ENCODE measurements at regions of chr22 and their contacts with region 1.

Region 1: GRCh38 chr22:23178512-23179254 is 1.6 kb upstream of the BCR start:
- DNase-seq: peak; percentile 60 to 74
- ATAC-seq: peak; percentile 43 to 80 (median 67)
- H3K4me3 ChIP-seq: peak overlapping the region in 1 of 10 donors; percentile 64
- H3K27ac ChIP-seq: peak overlapping the region in 2 of 10 donors; percentile 67 to 71
- H3K4me1 ChIP-seq: peaks cover 9 to 45% (median 41%) of the 10 kb centered on the region in 9 donors
- H3K27me3 ChIP-seq: no peaks in the 10 kb centered on the region
- CTCF ChIP-seq: peak; percentile 93 to 99 (median 97)

Region 2: DNA sequence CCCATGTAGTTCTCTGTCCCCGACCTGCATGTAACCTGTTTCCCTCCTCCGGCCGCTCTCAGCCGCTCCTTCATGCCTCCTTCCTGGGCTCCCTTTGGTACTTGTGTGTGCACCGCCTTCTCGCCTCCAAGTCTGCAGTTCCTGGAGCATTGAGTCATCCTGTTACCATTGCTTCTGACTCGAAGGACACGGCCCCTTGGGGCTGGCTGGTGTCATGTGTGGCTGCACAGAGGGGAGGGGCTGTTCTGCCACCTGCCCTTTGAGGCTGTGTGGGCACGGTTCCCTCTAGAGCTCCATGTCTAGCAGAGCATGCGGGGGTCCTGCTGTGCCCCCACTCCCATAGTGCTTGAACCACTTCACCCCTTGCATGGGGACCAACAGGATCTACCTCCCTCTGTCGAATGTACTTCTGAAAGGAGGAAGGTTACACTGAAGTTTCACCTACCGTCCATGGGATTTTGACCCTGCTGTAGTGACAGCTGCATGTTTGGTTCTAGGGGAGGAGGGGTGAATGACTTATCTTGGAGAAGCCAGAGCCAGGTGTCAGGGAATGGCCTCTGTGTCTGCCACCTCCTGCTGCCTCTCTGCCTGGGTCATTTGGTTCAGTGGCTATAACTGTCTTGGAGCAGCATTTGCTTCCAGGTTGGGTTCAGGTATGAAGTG is 41.3 kb after region 1 on chr22:
- intact Hi-C with region 1: loop called in 5 of 10 experiments (anchors 5 kb)
- DNase-seq: no peak
- ATAC-seq: peak in 2 of 8 donors; percentile 5 to 17
- H3K4me3 ChIP-seq: no peak overlapping the region
- H3K27ac ChIP-seq: peak overlapping the region in 4 of 10 donors; percentile 48 to 78 (median 71)
- H3K4me1 ChIP-seq: peaks cover 54 to 100% (median 90%) of the 10 kb centered on the region in 9 donors
- H3K27me3 ChIP-seq: no peaks in the 10 kb centered on the region
- CTCF ChIP-seq: no peak

Region 3: DNA sequence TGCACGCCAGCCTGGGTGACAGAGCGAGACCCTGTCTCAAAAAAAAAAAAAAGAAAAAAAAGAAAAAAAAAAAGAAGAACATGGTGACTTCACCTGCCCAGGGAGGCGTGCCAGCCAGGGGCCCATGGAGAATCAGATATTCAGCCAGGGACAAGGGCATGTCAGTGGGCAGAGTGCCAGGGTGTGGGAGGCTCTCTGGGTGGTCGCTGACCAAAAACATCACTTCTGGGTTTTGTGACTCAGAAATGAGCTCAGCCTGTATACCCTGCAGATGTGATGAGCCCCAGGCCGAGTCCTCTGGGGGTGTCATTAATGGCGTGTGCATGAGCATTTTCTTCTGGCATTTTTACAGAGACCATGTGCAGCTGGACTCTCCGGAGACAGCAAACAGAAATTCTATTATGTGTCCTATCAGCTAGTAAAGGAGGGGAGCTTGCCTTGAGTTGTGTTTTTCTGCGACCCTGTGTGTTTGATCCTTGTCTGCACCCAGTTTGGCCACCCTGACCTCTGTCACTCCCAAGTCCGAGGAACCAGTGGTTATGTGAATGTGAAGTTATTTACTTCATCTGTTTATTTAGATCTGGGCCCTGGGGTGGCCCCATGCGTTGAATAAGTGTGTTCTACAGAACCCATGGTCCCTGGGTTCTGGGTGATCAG is 55.2 kb after region 1 on chr22:
- intact Hi-C with region 1: loop called in 7 of 10 experiments (anchors 5 to 10 kb)
- DNase-seq: peak in 1 of 2 donors; percentile 50
- ATAC-seq: peak in 6 of 8 donors; percentile 26 to 51 (median 37)
- H3K4me3 ChIP-seq: no peak overlapping the region
- H3K27ac ChIP-seq: peak overlapping the region in 3 of 10 donors; percentile 7 to 58 (median 31)
- H3K4me1 ChIP-seq: peaks cover 17 to 73% (median 48%) of the 10 kb centered on the region in 9 donors
- H3K27me3 ChIP-seq: no peaks in the 10 kb centered on the region
- CTCF ChIP-seq: no peak

Region 4: DNA sequence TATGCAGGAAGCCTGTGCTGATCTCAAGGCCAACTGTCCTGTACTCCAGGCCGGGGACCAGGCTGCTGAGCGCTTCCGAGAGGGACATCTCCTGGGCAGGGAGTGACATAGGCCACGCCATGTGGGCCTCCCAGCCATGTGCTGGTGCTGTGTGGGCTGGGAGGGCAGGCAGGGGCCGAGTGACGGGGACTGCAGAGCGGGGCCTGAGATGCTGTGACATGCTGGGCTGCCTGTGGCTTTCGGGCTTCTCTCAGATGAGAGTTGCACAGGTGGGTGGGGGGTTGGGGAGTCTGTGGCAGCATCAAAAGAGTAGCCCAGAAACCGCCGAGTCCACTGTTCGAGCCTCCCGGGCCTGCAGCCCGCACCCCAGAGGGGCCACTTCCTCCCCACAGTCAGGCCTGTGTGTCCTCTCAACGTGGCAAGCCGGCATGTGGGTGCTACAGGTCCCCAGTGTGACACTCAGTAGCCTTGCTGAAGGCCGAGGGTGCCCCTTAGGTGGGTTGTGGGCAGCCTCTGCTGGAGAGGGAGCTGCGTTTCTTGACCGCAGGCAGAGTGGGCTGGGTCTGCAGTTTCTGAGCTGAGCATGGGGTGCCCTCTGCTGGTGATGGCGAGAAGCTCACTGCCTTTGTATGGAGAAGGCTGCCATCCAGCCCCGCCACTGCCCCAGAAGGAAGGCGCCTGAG is 102.9 kb after region 1 on chr22:
- intact Hi-C with region 1: loop called (anchors 1 to 2 kb)
- DNase-seq: peak; percentile 84 to 85
- ATAC-seq: peak; percentile 74 to 92 (median 84)
- H3K4me3 ChIP-seq: no peak overlapping the region
- H3K27ac ChIP-seq: peak overlapping the region in 6 of 10 donors; percentile 20 to 59 (median 38)
- H3K4me1 ChIP-seq: peaks cover 9 to 36% (median 26%) of the 10 kb centered on the region in 9 donors
- H3K27me3 ChIP-seq: no peaks in the 10 kb centered on the region
- CTCF ChIP-seq: peak; percentile 83 to 97 (median 95)

Region 5: DNA sequence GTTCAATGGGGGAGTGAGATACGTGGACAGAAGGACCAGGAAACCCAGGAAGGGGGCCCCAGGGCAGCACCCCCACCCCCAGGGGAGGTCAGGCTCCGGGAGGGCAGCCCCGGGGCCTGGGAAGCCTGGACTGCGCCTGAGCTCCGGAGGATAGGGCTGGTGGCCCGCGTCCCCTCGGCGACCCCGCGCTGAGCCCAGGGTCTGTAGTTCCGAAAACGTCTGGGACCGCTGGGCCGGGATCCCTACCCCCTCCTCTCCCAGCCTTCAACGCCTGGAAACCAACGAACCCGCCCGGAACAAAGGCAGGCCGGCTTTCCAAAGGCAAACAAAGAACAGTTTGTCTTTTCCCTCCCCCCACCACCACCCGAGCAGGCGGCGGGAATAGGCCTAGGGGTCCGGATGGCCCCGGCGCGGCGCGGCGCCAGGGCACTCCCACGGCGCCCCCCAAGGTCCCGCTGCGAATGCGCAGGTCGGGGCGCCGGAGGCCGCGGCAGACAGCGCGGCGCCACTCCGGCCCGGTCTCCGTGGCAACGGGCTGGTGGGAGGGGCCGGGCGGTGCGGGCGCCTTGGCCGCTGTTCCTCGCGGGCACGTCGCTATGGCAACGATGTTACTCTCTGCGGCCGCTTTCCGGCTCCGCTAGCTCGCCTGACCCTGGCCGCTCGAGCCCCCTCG is 342.9 kb after region 1 on chr22:
- intact Hi-C with region 1: loop called in 1 of 10 experiments (anchors 10 kb)
- DNase-seq: peak; percentile 90 to 92
- ATAC-seq: peak; percentile 91 to 95 (median 92)
- H3K4me3 ChIP-seq: peak overlapping the region in 9 of 10 donors; percentile 26 to 61 (median 54)
- H3K27ac ChIP-seq: peak overlapping the region; percentile 82 to 98 (median 95)
- H3K4me1 ChIP-seq: peaks cover 12 to 37% (median 20%) of the 10 kb centered on the region in 9 donors
- H3K27me3 ChIP-seq: peaks cover 0 to 31% (median 0%) of the 10 kb centered on the region in 7 donors
- CTCF ChIP-seq: peak in 5 of 9 donors; percentile 11 to 41 (median 31)

Measured in heart right ventricle (tissue), 16 donors.